Left cardiac atrium (tissue), 4 donors: ENCODE measurements at regions of chr11 and their contacts with region 1.

Region 1: GRCh38 chr11:2549876-2550620 is 105.2 kb downstream of the KCNQ1 start:
- DNase-seq: peak; percentile 23
- ATAC-seq: peak; percentile 61 to 79

Region 2: DNA sequence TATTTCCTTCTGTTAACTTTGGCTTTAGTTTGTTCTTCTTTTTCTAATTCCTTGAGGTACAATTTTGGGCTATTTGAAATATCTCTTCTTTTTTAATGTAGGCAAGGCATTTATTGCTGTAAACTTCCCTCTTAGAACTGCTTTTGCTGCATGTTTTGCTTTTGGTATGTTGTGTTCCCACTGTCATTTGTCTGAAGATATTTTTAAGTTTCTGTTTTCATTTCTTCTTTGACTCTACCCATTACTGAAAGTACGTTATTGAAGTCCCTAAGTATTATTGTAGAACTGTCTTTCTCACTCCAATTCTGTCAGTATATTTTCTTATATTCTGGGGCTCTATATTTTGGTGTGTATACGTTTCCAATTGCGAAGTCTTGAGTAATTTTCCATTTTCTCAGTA is 71.8 kb after region 1 on chr11:
- intact Hi-C with region 1: loop called in 1 of 2 experiments (anchors 10 kb)
- DNase-seq: no peak
- ATAC-seq: no peak